ENCODE measurements at regions of chr9 and their contacts with region 1.

Region 1: DNA sequence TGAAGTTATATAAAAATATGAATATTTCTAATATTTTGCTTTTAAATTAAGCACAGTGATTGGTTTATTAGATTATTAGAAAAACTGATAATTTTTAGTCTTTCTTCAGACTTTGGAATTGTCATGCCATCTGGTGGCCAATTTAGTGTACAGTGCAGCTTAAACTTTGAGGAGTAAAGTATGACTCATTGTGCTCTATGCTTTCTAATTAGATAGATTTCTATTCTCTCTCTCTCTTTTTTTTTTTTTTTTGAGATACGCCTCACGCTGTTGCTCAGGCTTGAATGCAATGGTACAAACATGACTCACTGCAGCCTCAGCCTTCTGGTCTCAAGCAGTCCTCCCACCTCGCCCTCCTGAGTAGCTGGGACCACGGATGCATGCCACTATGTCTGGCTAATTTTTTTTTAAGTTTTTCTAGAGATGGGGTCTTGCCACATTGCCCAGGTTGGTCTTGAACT is 42.1 kb upstream of the GPR21 start:
- DNase-seq: peak; percentile 30
- H3K4me3 Mint-ChIP-seq: no peak overlapping the region
- H3K27ac Mint-ChIP-seq: no peak overlapping the region
- H3K4me1 Mint-ChIP-seq: no peaks in the 10 kb centered on the region
- H3K27me3 Mint-ChIP-seq: no peaks in the 10 kb centered on the region
- CTCF ChIP-seq: peak; percentile 28

Region 2: GRCh38 chr9:122719218-122719617 is 272.2 kb before region 1 on chr9:
- CTCF ChIA-PET with region 1: no interaction called
- intact Hi-C with region 1: no loop called
- DNase-seq: no peak
- H3K4me3 Mint-ChIP-seq: no peak overlapping the region
- H3K27ac Mint-ChIP-seq: no peak overlapping the region
- H3K4me1 Mint-ChIP-seq: no peaks in the 10 kb centered on the region
- H3K27me3 Mint-ChIP-seq: no peaks in the 10 kb centered on the region
- CTCF ChIP-seq: no peak

Region 3: DNA sequence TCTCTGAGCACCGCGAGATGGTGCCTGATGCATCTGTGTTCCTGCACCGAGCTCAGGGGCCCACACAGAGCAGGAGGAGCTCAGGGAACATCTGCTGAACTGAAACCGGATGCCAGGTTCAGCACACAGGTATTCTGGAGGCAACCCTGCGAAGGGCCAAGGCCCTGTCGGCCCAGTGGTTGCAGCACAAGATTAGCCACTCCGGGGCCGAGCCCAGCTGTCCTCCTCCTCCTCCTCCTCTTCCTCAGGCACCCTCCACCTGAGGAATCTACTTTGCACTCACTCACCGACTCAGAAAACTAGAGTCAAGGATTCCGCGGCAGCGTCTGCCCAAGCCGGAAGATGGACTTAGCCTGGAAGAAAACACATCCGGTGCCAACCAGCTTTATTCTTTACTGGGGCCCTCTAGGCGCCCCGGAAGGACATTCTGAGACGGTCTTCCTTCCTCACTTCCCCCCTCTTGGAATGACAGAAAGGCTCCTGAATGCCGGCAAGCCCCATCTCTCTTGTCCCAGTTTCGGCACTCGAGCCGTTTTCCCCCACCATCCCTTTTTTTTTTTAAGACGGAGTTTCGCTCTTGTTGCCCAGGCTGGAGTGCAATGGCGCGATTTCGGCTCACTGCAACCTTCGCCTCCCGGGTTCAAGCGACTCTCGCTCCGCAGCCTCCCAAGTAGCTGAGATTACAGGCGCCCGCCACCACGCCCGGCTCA is 78.3 kb before region 1 on chr9 and contains the start of gene ZBTB6:
- CTCF ChIA-PET with region 1: no interaction called
- intact Hi-C with region 1: loop called (anchors 5 kb)
- DNase-seq: peak; percentile 49
- H3K4me3 Mint-ChIP-seq: peak within 1 kb of the TSS; percentile 92
- H3K27ac Mint-ChIP-seq: peak within 1 kb of the TSS; percentile 95
- H3K4me1 Mint-ChIP-seq: peaks cover 16% of the 10 kb centered on the region
- H3K27me3 Mint-ChIP-seq: no peaks in the 10 kb centered on the region
- CTCF ChIP-seq: no peak
- total RNA-seq, gene ZBTB6: 6.1 and 6.3 TPM in 2 replicates

Region 4: DNA sequence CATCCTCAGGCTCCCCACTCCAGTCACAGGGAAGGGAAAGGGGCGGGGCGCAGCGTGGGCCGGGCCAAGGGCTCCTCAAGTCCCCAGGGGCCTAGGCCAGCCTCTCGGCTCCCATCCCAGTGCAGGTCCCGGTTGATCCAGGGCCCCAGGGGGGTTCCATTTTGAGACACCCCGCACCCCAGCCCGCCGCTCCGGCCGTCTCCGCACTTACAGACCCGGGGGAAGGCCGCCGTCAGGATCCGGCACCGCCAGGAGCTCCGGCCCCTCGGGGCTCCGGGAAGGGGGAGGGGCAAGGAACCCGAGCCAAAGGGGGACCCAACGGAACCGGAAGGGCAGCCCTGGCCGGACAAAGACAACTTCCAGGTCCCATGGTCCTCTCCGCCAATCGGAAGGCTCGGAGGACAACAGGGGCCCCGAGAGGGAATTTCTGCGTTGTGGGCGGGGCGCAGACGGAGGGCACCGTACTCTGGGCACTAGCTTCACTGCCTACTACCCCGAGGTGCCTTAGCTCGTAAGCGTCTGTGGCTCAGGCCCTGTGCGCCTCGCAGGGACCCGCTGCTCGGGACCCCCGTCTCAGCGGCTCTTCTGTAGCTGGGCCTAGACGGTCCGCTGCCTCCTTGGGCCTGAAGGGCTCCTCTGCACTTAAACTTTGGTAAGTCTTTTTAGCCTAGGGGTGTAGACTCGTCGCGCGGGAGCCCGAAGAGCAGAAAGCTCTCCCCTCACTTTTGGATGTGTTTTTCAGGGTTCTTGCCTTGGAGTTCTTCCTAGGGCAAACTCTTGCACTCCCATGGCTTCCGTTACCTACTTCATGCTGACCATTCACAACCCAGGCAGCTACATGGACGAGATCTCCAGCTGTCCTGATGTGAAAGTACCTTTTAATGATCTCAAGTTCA is 59.9 kb before region 1 on chr9 and contains the start of gene ZBTB26:
- CTCF ChIA-PET with region 1: interaction called, 5 read pairs
- intact Hi-C with region 1: loop called (anchors 1 kb)
- DNase-seq: peak; percentile 90
- H3K4me3 Mint-ChIP-seq: no peak within 1 kb of the TSS
- H3K27ac Mint-ChIP-seq: peak within 1 kb of the TSS; percentile 92
- H3K4me1 Mint-ChIP-seq: no peaks in the 10 kb centered on the region
- H3K27me3 Mint-ChIP-seq: no peaks in the 10 kb centered on the region
- CTCF ChIP-seq: no peak
- total RNA-seq, gene ZBTB26: 5.8 and 6.7 TPM in 2 replicates

Measured in Calu3 (cell line).